Endothelial cell of umbilical vein (primary cell): ENCODE measurements at regions of chr7 and their contacts with region 1.

Region 1: DNA sequence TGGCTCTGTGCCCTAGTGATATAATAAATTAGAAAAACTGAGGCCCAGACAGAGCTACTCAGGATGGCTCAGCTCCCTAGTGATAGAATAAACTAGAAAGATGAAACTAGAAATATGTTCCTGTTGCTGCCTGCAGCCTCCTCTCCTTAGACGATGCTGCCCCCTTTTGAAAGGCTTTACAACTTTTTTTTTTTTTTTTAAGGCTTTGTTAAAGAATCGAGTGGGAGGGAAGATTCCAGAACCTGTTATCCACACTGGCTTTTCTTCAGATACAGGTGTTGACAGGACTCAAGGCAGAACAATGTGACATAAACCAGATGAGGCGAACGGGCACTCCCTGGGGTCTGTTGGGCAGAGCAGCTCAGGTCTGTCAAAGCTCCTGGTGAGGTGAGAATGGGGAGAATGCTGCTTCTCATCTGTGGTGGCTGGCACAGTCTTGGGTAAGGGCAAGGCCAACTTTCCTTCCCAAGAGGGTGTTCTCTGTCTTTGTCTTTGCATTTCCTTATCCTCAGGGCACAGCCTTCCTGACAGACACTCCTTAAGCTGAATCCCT is 175.1 kb downstream of the COBL start:
- DNase-seq: peak; percentile 81
- H3K4me3 ChIP-seq: no peak overlapping the region
- H3K27ac ChIP-seq: no peak overlapping the region
- H3K4me1 ChIP-seq: peaks cover 27% of the 10 kb centered on the region
- H3K27me3 ChIP-seq: peaks cover 0 to 2% of the 10 kb centered on the region in 2 experiments
- CTCF ChIP-seq: peak; percentile 48 to 60
- POLR2A ChIP-seq: no peak

Region 2: DNA sequence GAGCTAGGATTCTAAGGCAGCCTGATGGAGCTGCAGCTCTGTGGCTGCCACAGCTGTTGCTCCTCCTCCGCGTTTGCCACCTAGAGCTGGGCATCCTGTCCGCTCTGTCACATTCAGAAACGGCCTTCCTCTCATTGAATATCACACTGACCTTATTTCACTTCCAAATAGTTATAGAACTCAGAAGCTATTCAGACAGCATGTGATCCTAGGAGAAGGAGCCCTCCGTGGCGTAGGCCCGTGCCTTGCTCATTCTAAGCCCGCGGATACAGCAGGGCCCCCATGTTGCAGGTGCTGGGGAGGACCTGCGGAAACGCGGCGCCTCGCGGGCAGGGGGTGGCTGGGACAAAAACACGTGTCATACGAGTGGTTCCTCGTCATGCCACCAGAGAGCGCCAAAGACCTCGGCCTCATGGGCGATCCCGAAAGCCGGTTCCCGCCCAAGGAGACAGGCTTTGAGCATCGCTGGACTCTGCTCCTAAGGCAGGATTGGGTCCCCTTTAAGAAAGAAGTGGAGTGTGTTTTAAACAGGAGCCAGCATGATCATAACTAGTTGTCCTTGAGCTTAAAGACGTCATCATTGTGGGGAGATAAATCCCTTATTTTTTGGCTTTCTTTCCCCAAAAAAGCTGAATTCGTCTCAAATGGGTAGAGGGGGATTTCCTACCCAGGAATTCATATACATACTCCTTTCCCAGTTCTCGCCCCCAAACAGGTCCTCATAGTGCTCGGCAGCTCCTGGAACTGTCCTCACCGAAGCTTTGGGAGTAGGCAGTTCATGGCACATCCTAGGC is 673.5 kb before region 1 on chr7:
- CTCF ChIA-PET with region 1: interaction called, 104 read pairs
- POLR2A ChIA-PET with region 1: no interaction called
- dilution Hi-C with region 1: no loop called
- intact Hi-C with region 1: loop called (anchors 1 kb)
- DNase-seq: peak; percentile 80
- H3K4me3 ChIP-seq: no peak overlapping the region
- H3K27ac ChIP-seq: no peak overlapping the region
- H3K4me1 ChIP-seq: peaks cover 4% of the 10 kb centered on the region
- H3K27me3 ChIP-seq: no peaks in the 10 kb centered on the region
- CTCF ChIP-seq: peak; percentile 82 to 90
- POLR2A ChIP-seq: no peak

Region 3: DNA sequence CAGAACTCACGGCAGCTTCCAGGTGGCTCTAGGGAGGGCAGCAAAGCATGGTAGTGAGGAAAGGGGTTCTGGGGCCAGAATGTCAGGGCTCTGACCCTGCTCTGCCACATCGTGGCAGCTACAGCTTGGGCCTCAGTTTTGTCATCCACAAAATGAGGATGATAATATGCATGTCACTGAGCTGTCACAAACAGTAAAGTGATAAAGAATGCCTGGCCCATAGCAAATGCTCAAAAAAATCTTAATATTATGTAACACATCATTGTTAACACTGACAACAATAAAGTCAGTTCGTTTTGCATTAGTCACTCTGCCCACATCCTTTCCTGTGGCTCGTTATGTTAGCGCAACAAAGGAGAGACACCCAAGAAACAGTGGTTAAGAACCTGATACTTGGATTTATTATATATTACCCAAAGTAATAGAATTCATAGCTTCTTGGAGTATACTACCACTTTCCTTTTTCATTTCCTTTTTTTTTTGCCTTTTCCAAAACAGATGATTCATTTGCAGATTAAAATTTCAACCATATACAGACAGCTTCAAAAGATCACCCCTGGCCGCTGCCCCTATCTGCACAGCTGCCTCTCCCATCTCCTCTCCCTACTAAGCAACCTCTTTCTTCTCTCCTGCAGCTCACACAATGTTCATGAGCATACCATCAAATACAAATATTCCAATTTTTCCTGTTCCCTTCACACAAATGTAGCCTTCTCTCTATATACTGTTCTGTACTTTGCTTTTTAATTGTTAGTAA is 530.8 kb before region 1 on chr7:
- CTCF ChIA-PET with region 1: interaction called, 23 read pairs
- POLR2A ChIA-PET with region 1: interaction called, 3 read pairs
- dilution Hi-C with region 1: no loop called
- intact Hi-C with region 1: no loop called
- DNase-seq: peak; percentile 52
- H3K4me3 ChIP-seq: no peak overlapping the region
- H3K27ac ChIP-seq: peak overlapping the region; percentile 38
- H3K4me1 ChIP-seq: peaks cover 23% of the 10 kb centered on the region
- H3K27me3 ChIP-seq: no peaks in the 10 kb centered on the region
- CTCF ChIP-seq: no peak
- POLR2A ChIP-seq: no peak

Region 4: GRCh38 chr7:50685135-50686080 is 456.1 kb before region 1 on chr7:
- CTCF ChIA-PET with region 1: interaction called, 7 read pairs
- POLR2A ChIA-PET with region 1: no interaction called
- dilution Hi-C with region 1: no loop called
- intact Hi-C with region 1: loop called (anchors 1 kb)
- DNase-seq: peak; percentile 58
- H3K4me3 ChIP-seq: no peak overlapping the region
- H3K27ac ChIP-seq: peak overlapping the region; percentile 75
- H3K4me1 ChIP-seq: peaks cover 30% of the 10 kb centered on the region
- H3K27me3 ChIP-seq: no peaks in the 10 kb centered on the region
- CTCF ChIP-seq: no peak
- POLR2A ChIP-seq: no peak

Region 5: GRCh38 chr7:50826371-50827172 is 315.0 kb before region 1 on chr7:
- CTCF ChIA-PET with region 1: interaction called, 3 read pairs
- POLR2A ChIA-PET with region 1: no interaction called
- dilution Hi-C with region 1: no loop called
- intact Hi-C with region 1: loop called (anchors 1 kb)
- DNase-seq: peak; percentile 97
- H3K4me3 ChIP-seq: peak overlapping the region in 1 of 3 experiments; percentile 20
- H3K27ac ChIP-seq: peak overlapping the region; percentile 99
- H3K4me1 ChIP-seq: peaks cover 34% of the 10 kb centered on the region
- H3K27me3 ChIP-seq: no peaks in the 10 kb centered on the region
- CTCF ChIP-seq: peak in 1 of 2 donors; percentile 14
- POLR2A ChIP-seq: peak; percentile 43

Region 6: GRCh38 chr7:51123322-51124029 is 18.1 kb before region 1 on chr7:
- CTCF ChIA-PET with region 1: interaction called, 8 read pairs
- POLR2A ChIA-PET with region 1: no interaction called
- dilution Hi-C with region 1: no loop called
- intact Hi-C with region 1: loop called (anchors 1 kb)
- DNase-seq: no peak
- H3K4me3 ChIP-seq: no peak overlapping the region
- H3K27ac ChIP-seq: no peak overlapping the region
- H3K4me1 ChIP-seq: peaks cover 12% of the 10 kb centered on the region
- H3K27me3 ChIP-seq: peaks cover 0 to 1% of the 10 kb centered on the region in 2 experiments
- CTCF ChIP-seq: no peak
- POLR2A ChIP-seq: no peak